ENCODE measurements at regions of chr2 and their contacts with region 1.

Region 1: GRCh38 chr2:119264781-119265692 is 41.4 kb downstream of the STEAP3 start:
- DNase-seq: peak; percentile 24
- ATAC-seq: peak; percentile 99
- H3K4me3 ChIP-seq: no peak overlapping the region
- H3K27ac ChIP-seq: no peak overlapping the region
- H3K4me1 ChIP-seq: no peaks in the 10 kb centered on the region
- H3K27me3 ChIP-seq: no peaks in the 10 kb centered on the region
- CTCF ChIP-seq: peak; percentile 83 to 91 (median 84)
- POLR2A ChIP-seq: no peak
- RAD21 ChIP-seq: peak; percentile 91

Region 2: DNA sequence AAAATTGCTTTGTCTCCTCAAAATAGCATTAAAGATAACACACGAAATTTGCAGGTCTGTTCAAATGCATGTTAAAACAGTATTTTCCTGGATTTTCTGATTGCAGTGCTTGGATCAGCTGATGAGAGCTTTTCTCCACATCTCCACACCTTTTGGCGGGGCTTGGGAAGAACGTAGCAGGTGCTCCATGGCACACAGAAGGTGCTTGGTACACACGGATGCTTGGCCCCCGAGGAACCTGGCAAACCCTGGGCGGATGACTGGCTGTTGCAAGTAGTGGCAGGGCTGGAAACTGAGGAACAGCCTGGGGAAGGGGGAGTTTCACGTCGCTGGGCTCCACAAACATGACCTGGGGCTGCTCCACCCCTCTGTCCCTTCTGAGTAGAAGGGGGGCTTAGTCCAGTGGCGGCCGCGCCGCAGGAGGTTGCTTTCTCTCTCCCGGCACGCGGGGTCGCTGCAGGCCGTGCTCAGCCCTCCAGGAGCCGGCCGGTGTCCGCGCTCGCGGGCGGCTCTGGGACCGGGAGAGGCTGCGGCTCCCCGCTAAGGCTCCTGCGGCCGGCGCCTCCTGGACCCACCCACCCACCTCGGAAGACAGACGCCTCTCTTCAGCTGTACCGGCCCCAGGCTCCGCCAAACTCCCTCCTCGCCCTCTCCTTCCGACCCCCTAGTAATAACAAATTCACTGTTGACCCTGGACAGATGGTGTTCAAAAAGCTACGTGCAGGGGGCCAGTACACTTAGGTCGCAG is 253.7 kb before region 1 on chr2:
- CTCF ChIA-PET with region 1: no interaction called
- POLR2A ChIA-PET with region 1: no interaction called
- RAD21 ChIA-PET with region 1: no interaction called
- intact Hi-C with region 1: loop called (anchors 1 kb)
- DNase-seq: peak; percentile 16
- ATAC-seq: peak; percentile 95
- H3K4me3 ChIP-seq: peak overlapping the region in 1 of 2 experiments; percentile 10; a peak in 1 of 4 replicates
- H3K27ac ChIP-seq: no peak overlapping the region
- H3K4me1 ChIP-seq: no peaks in the 10 kb centered on the region; a peak in 1 of 4 replicates
- H3K27me3 ChIP-seq: peaks cover 18% of the 10 kb centered on the region; the same call in 1 of the 2 replicates
- CTCF ChIP-seq: peak; percentile 59 to 74 (median 64)
- POLR2A ChIP-seq: no peak
- RAD21 ChIP-seq: peak; percentile 83

Region 3: DNA sequence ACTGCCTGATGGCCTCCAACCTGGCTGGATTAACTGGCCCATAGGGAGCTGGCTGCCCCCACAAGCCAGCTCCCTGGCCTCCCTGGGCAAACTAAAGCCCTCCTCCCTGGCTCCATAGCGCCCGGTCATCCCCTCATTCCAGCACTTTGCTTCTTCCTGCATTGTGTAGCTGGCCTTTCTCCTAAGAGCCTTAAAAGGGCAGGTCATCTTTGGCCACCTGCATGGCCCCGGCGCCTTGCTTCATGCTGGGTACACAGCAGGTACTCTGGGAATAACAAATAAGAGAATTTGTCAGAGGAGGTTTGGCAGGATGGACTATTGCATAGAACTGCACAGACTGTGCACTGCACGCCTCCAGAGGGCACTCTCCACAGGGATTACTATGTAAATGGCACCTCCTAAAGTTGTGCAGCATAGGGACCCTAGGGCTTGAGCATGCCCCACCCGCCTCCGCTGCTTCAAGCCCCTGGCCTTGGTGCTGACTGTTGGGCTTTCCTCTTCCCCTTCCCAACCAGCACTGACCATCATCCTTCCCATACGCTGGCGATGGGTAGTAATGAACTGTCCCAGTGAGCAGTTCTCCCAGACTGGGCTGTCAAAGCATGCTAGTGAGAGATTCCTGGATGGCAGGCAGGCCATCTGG is 30.5 kb before region 1 on chr2:
- CTCF ChIA-PET with region 1: no interaction called
- POLR2A ChIA-PET with region 1: no interaction called
- RAD21 ChIA-PET with region 1: no interaction called
- intact Hi-C with region 1: loop called (anchors 1 kb)
- DNase-seq: no peak
- ATAC-seq: peak; percentile 92
- H3K4me3 ChIP-seq: no peak overlapping the region
- H3K27ac ChIP-seq: no peak overlapping the region
- H3K4me1 ChIP-seq: peaks cover 3 to 13% of the 10 kb centered on the region in 2 experiments
- H3K27me3 ChIP-seq: no peaks in the 10 kb centered on the region
- CTCF ChIP-seq: peak; percentile 70 to 77 (median 73)
- POLR2A ChIP-seq: no peak
- RAD21 ChIP-seq: peak; percentile 84